ENCODE measurements at regions of chr11 and their contacts with region 1.

Region 1: DNA sequence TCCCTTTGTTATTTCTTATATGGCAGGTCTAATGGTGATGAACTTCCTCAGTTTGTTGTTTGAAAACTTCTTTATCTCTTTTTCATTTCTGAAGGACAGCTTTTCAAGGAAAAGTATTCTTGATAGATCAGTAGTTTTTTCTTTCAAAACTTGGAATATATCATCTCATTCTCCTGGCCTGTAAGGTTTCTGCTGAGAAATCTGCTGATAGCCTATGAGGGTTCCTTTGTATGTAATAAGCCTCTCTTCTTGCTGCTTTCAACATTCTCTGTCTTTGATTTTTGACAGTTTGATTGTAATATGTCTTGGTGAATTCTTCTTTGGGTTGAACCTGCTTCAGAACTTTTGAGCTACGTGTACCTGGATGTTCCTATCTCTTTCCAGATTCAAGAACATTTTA is 46.0 kb downstream of the PIWIL4 start:
- DNase-seq: no peak
- ATAC-seq: no peak
- H3K4me3 Mint-ChIP-seq: no peak overlapping the region
- H3K27ac Mint-ChIP-seq: no peak overlapping the region
- H3K4me1 Mint-ChIP-seq: no peaks in the 10 kb centered on the region
- H3K27me3 Mint-ChIP-seq: no peaks in the 10 kb centered on the region
- CTCF ChIP-seq: no peak

Region 2: GRCh38 chr11:94297985-94298576 is 315.0 kb before region 1 on chr11:
- CTCF ChIA-PET with region 1: no interaction called
- POLR2A ChIA-PET with region 1: no interaction called
- intact Hi-C with region 1: no loop called
- DNase-seq: no peak
- ATAC-seq: no peak
- H3K4me3 Mint-ChIP-seq: no peak overlapping the region
- H3K27ac Mint-ChIP-seq: no peak overlapping the region
- H3K4me1 Mint-ChIP-seq: no peaks in the 10 kb centered on the region
- H3K27me3 Mint-ChIP-seq: peaks cover 13% of the 10 kb centered on the region
- CTCF ChIP-seq: no peak

Region 3: GRCh38 chr11:94563176-94563847 is 49.8 kb before region 1 on chr11:
- CTCF ChIA-PET with region 1: no interaction called
- POLR2A ChIA-PET with region 1: no interaction called
- intact Hi-C with region 1: no loop called
- DNase-seq: no peak
- ATAC-seq: no peak
- H3K4me3 Mint-ChIP-seq: no peak overlapping the region
- H3K27ac Mint-ChIP-seq: no peak overlapping the region
- H3K4me1 Mint-ChIP-seq: no peaks in the 10 kb centered on the region
- H3K27me3 Mint-ChIP-seq: no peaks in the 10 kb centered on the region
- CTCF ChIP-seq: no peak

Region 4: DNA sequence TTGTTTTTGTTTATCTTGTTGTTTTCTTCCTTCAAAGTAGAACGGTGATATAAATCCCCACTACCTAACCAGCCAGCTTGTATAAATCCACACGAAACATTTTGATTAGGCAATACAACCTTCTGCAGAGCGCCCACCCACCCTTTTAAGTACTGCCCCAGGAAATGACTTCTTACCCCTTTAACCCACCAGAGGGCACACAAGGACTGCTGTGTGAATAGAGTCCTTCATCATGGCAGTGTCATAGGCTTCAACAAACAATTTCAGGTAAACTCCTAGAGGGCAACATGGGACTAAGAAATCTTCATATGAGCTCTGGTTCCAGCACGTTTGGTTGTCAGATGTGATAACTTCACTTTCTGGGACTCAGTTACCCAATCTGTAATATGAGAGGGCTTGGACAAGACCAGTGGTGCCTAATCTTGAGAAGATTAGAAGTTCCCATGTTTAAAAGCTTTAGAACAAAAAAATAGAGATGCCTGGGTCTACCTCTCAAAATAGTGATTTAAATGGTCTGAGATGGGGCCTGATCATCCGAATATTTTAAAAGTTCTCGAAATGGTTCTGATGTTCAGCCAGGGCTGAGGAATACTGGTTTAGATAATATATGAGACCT is 10.1 kb after region 1 on chr11:
- CTCF ChIA-PET with region 1: interaction called, 23 read pairs
- POLR2A ChIA-PET with region 1: no interaction called
- intact Hi-C with region 1: no loop called
- DNase-seq: peak; percentile 70
- ATAC-seq: peak; percentile 90
- H3K4me3 Mint-ChIP-seq: no peak overlapping the region
- H3K27ac Mint-ChIP-seq: no peak overlapping the region
- H3K4me1 Mint-ChIP-seq: no peaks in the 10 kb centered on the region
- H3K27me3 Mint-ChIP-seq: peaks cover 8% of the 10 kb centered on the region
- CTCF ChIP-seq: peak; percentile 56

Region 5: GRCh38 chr11:94721565-94722292 is 108.6 kb after region 1 on chr11:
- CTCF ChIA-PET with region 1: no interaction called
- POLR2A ChIA-PET with region 1: no interaction called
- intact Hi-C with region 1: no loop called
- DNase-seq: no peak
- ATAC-seq: no peak
- H3K4me3 Mint-ChIP-seq: no peak overlapping the region
- H3K27ac Mint-ChIP-seq: no peak overlapping the region
- H3K4me1 Mint-ChIP-seq: no peaks in the 10 kb centered on the region
- H3K27me3 Mint-ChIP-seq: peaks cover 7% of the 10 kb centered on the region
- CTCF ChIP-seq: no peak